GM12878 (cell line): ENCODE measurements at regions of chr10 and their contacts with region 1.

Region 1: DNA sequence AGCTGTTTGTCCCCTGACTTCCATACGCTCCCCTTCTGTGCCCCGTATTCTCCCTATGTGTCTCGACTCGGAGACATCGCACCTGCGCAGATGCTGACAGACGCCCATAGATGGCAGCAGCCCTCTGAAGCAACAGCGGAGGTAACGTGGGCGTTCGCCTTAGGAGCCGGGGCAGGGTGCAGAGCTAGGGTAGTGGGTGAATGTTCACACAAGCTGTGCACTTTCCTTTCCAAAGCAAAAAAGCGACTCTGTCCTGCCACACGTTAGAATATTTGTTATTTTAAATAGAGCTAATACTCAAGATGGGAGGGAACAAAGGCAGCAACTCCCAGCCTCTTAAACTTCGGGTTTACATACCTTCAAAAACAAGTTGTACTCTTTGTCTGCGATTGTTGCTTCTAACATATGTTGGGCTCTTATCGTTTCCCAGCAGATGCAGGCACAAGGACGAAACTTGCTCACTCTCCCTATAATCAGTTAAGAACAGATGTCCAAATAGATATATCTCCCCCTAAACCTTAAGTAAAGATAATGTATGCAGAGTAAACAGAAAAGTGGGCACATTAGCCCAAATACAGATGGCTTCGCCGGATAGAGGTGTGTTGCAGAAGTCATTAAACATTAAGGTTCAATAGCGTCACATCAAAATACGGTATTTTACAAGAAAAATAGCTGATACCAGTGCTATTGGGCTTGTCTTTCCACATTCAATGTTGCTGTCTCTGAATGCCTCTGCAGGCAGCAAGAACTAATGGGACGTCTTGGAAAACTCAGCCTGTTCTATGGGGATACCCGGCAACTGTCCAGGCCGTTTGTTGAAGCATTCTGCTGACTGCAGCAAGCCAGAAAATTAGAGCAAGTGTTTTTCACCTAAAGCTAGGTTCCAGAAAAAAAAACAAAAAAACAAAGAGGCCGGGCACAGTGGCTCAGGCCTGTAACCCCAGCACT is 340.3 kb upstream of the PRKCQ start:
- DNase-seq: no peak
- ATAC-seq: peak; percentile 99
- H3K4me3 ChIP-seq: no peak overlapping the region
- H3K27ac ChIP-seq: no peak overlapping the region
- H3K4me1 ChIP-seq: peaks cover under 1% of the 10 kb centered on the region
- H3K27me3 ChIP-seq: no peaks in the 10 kb centered on the region
- CTCF ChIP-seq: peak; percentile 92 to 97 (median 95)
- EP300 ChIP-seq: no peak
- POLR2A ChIP-seq: no peak
- RAD21 ChIP-seq: peak; percentile 99

Region 2: GRCh38 chr10:6973899-6974298 is 53.6 kb after region 1 on chr10:
- CTCF ChIA-PET with region 1: interaction called, 49 read pairs
- POLR2A ChIA-PET with region 1: no interaction called
- RAD21 ChIA-PET with region 1: interaction called, 7 read pairs
- SMC1A ChIA-PET with region 1: interaction called, 9 read pairs
- in situ Hi-C with region 1: no loop called
- intact Hi-C with region 1: loop called (anchors 1 kb)
- DNase-seq: no peak
- ATAC-seq: no peak
- H3K4me3 ChIP-seq: no peak overlapping the region
- H3K27ac ChIP-seq: no peak overlapping the region
- H3K4me1 ChIP-seq: no peaks in the 10 kb centered on the region
- H3K27me3 ChIP-seq: peaks cover 0 to 5% of the 10 kb centered on the region in 2 experiments; a peak in 2 of 4 replicates
- CTCF ChIP-seq: no peak
- EP300 ChIP-seq: no peak
- POLR2A ChIP-seq: no peak
- RAD21 ChIP-seq: no peak

Region 3: DNA sequence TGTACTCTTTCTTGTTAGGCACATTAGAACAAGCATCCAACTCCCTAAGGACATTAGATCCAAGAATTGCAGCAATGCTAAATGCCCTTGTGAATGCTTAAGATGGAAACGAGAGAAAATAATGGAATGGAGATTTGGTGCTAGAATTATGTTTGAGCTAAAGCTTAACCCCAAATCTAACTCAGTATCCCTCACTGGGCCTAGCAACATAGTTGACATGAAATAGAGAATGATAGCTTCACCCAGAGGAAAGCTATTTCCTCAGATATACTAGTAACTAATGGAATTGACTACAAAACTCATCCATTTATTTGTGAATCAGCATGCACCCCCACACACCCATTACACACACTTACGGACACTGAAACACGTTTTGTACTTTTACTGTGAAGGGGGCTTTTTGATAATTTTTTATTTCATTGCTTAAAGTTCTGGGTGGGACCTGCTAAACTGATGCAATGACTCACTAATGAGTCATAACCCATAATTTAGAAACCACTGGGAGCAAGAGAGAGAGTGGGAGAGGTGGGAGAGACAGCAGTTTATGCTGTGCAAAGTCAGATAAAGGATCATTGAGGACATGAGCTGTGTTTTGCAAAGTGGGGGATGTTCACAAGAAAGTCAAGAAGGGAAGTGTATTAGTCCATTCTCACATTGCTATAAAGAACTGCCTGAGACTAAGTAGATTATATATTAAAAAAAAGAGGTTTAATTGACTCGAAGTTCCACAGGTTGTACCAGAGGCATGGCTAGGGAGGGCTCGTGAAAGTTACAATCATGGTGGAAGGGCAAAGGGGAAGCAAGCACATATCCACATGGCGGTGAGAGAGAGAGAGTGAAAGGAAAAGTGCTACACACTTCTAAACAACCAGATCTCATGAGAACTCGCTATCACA is 107.8 kb after region 1 on chr10:
- CTCF ChIA-PET with region 1: interaction called, 20 read pairs
- POLR2A ChIA-PET with region 1: no interaction called
- RAD21 ChIA-PET with region 1: no interaction called
- SMC1A ChIA-PET with region 1: no interaction called
- in situ Hi-C with region 1: no loop called
- intact Hi-C with region 1: no loop called
- DNase-seq: no peak
- ATAC-seq: no peak
- H3K4me3 ChIP-seq: no peak overlapping the region
- H3K27ac ChIP-seq: no peak overlapping the region
- H3K4me1 ChIP-seq: no peaks in the 10 kb centered on the region
- H3K27me3 ChIP-seq: no peaks in the 10 kb centered on the region
- CTCF ChIP-seq: no peak
- EP300 ChIP-seq: no peak
- POLR2A ChIP-seq: no peak
- RAD21 ChIP-seq: no peak

Region 4: DNA sequence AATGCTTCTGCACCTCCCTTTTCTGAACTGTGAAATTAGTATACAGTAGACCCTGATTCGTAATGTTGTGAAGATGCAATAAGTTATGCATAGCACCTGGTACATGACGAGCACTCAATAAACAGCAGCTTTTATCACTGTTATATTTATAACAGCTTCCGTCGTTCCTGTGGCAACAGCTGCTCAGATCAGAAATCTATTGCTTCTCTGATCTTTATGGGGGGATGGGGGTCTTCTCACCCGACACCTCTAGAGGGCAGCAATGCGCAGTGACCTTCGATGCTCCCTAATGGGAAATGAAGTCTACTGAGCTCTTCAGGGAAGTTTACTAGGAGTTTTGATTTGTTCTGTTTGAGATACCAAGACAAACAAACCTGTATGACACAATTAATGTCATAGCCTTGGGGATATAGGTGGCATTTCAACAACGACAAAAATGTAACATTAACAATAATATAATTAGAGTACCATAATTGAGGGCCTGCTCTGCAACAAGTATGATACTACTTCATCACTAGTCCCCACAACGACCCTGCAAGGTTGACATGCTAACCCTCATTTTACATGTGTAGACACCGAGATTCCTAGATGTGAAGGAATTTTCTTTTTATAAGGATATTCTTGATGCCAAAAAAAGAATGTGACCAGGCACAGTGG is 200.9 kb after region 1 on chr10:
- CTCF ChIA-PET with region 1: interaction called, 11 read pairs
- POLR2A ChIA-PET with region 1: no interaction called
- RAD21 ChIA-PET with region 1: interaction called, 8 read pairs
- SMC1A ChIA-PET with region 1: interaction called, 14 read pairs
- in situ Hi-C with region 1: no loop called
- intact Hi-C with region 1: loop called (anchors 1 kb)
- DNase-seq: no peak
- ATAC-seq: peak; percentile 91
- H3K4me3 ChIP-seq: no peak overlapping the region
- H3K27ac ChIP-seq: no peak overlapping the region
- H3K4me1 ChIP-seq: no peaks in the 10 kb centered on the region
- H3K27me3 ChIP-seq: no peaks in the 10 kb centered on the region; a peak in 1 of 4 replicates
- CTCF ChIP-seq: peak; percentile 81 to 82 (median 82)
- EP300 ChIP-seq: no peak
- POLR2A ChIP-seq: no peak
- RAD21 ChIP-seq: peak; percentile 84

Region 5: DNA sequence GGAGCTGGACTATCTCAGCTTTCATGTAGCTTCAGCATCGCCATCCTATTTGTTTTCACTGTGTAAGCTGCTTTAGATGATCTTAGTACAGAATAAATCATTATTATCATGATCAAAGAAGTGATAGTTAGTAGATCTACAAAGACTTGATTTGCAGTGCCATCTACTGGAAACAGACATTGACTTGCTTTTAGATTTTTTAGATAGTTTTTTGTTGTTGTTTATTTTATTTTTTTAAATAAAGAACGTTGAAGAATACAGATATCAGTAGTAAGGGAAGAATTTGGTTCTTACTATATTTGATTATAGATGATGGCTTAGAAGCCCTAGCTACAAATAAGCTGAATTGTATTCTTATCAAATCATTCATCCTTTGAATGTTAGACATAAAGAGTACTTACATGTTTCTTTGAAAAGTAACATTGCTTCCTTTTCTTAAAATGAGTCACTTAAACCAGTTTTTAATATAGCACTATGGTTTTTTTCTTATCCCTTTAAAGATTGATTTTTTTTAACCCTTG is 496.8 kb after region 1 on chr10:
- CTCF ChIA-PET with region 1: interaction called, 51 read pairs
- POLR2A ChIA-PET with region 1: no interaction called
- RAD21 ChIA-PET with region 1: interaction called, 11 read pairs
- SMC1A ChIA-PET with region 1: interaction called, 25 read pairs
- in situ Hi-C with region 1: no loop called
- intact Hi-C with region 1: no loop called
- DNase-seq: no peak
- ATAC-seq: peak; percentile 40
- H3K4me3 ChIP-seq: no peak overlapping the region
- H3K27ac ChIP-seq: no peak overlapping the region
- H3K4me1 ChIP-seq: peaks cover 13% of the 10 kb centered on the region
- H3K27me3 ChIP-seq: no peaks in the 10 kb centered on the region
- CTCF ChIP-seq: peak; percentile 25 to 61 (median 53); a peak in 4 of 6 replicates
- EP300 ChIP-seq: no peak
- POLR2A ChIP-seq: no peak
- RAD21 ChIP-seq: peak; percentile 67